ENCODE measurements at regions of chr9 and their contacts with region 1.

Region 1: DNA sequence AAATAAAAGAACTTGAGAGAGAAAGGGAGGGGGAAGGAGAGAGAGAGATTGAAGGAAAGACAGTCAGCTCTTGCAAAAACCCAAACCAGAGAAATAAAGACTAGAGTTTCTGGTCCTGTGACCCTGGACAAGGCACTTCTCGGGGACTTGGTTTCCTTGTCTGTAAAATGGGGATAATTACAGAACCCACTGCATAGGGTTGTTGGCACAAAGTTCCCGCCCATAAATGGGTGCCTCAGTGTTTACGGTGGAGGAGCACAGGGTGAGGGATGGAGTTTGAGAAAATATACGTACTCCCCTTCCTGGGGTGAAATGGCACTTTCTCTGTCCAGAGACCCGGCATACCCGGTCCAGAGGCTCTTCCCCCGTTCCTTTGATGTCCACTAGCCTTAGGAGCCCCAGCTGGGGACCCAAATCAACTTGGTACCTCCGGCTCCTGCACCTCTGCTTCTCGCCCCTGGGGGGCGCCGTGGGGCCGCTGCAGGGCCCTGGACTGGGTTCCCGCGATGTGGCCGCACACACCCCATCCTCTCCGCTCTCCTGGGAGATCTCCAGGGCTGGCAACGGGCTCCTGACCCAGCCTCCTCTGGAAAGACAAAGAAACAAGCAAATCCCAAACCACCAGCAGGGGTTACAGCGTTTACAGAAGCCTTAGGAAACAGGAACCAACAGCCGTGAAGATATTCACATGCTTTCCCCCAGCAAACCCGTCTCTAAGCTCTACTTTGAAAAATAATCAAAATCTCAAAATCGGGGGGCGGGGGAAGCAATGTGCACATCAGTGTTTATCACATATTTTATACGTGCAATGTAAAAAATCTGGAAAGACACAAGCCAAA is 26.3 kb downstream of the PTGES start:
- DNase-seq: peak; percentile 49 to 56
- ATAC-seq: peak; percentile 90

Region 2: GRCh38 chr9:129665389-129665775 is 61.2 kb before region 1 on chr9 and contains the start of gene PRRX2:
- intact Hi-C with region 1: loop called in 1 of 2 experiments (anchors 10 kb)
- DNase-seq: no peak
- ATAC-seq: no peak
- total RNA-seq, gene PRRX2: 0.52 to 1.1 TPM

Region 3: DNA sequence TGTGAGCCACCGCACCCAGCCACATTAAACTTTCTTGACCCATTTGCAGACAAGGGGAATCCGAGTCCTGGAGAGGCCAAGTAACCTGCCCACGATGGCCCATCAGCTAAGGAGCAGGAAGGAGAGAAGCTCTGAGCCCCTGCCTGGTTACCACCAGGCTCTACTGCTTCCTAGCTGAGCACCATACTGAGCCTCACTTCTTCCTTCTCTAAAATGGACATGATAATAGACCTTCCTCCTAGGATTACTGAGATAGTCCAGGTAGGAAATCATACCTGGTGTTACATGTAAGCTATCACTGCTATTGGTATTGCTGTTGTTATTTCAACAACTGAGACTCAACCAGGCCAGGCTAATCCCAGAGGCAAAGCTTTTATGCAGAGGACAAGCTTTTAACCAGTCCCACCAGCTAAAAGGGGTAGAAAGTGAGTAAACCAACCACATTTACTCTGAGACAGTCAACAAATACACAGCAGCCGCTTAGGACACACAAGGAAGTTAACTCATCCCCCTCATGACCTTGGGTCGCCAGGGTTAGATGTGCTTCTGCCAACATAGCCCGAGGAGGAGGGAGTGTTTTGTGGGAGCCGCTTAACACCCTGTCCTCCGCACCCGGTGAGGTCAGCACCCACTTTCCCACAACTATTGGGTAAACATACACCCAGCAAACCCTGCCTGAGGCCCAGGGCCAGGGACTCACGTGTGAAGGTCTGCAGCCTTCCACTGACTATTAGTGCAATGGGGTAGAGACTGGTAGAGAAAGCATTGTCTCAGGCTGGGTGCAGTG is 46.9 kb after region 1 on chr9:
- intact Hi-C with region 1: no loop called
- DNase-seq: no peak
- ATAC-seq: peak; percentile 23

Measured in left colon (tissue), 2 donors.